IMR-90 (cell line): ENCODE measurements at regions of chr15 and their contacts with region 1.

Region 1: DNA sequence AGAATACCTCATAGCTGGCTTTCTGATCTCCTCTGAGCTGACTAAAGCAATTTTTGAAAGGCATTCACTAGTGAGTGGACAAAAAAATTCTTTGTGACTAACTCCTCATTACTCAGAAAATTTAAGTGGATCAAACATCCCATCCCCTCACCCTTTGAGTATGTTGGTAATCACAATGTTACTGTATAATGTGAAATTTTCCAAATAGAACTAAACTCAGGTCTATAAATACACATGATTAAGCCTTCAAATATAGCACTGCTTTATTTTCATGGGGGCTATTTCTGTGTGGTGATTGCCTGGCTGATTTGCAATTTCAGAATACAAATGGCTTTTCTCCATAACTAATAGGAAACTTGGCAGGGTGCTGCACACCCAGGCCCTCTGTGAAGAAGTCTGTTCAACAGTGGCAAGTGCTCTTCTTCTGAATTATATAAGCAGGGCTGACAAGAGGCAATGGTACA is 45.9 kb upstream of the ACTC1 start:
- DNase-seq: peak; percentile 65
- ATAC-seq: peak; percentile 38
- H3K4me3 ChIP-seq: no peak overlapping the region
- H3K27ac ChIP-seq: no peak overlapping the region
- H3K4me1 ChIP-seq: peaks cover 7% of the 10 kb centered on the region
- H3K27me3 ChIP-seq: no peaks in the 10 kb centered on the region
- CTCF ChIP-seq: no peak
- POLR2A ChIP-seq: no peak
- RAD21 ChIP-seq: no peak

Region 2: GRCh38 chr15:32965897-32966296 is 1875.4 kb before region 1 on chr15:
- CTCF ChIA-PET with region 1: no interaction called
- POLR2A ChIA-PET with region 1: no interaction called
- dilution Hi-C with region 1: no loop called
- in situ Hi-C with region 1: no loop called
- intact Hi-C with region 1: loop called (anchors 10 kb)
- DNase-seq: no peak
- ATAC-seq: no peak
- H3K4me3 ChIP-seq: no peak overlapping the region
- H3K27ac ChIP-seq: peak overlapping the region; percentile 61; the same call in 1 of the 2 replicates
- H3K4me1 ChIP-seq: peaks cover 12% of the 10 kb centered on the region
- H3K27me3 ChIP-seq: no peaks in the 10 kb centered on the region
- CTCF ChIP-seq: no peak
- POLR2A ChIP-seq: no peak
- RAD21 ChIP-seq: no peak

Region 3: DNA sequence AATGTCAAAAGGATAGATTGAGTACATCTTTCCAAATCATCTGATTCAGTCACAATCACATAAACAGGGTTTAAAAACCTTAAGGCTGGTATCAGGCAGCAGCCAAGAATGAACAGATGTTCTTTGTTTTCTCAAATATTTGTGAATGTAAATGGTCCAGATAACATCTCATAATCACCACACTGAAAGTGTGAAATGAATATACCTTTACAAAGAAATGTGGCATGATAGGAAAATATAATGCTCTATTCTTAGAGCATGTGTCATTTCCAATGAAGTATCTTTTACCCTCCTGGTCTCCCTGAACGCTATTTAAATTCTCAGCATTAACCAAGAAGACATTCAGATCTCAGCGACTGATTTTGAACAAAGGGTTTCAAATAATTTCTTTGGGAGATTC is 37.2 kb before region 1 on chr15:
- CTCF ChIA-PET with region 1: no interaction called
- POLR2A ChIA-PET with region 1: no interaction called
- dilution Hi-C with region 1: no loop called
- in situ Hi-C with region 1: no loop called
- intact Hi-C with region 1: no loop called
- DNase-seq: no peak
- ATAC-seq: no peak
- H3K4me3 ChIP-seq: no peak overlapping the region
- H3K27ac ChIP-seq: no peak overlapping the region
- H3K4me1 ChIP-seq: peaks cover 12% of the 10 kb centered on the region
- H3K27me3 ChIP-seq: no peaks in the 10 kb centered on the region
- CTCF ChIP-seq: no peak
- POLR2A ChIP-seq: no peak
- RAD21 ChIP-seq: no peak